B cell (primary cell): ENCODE measurements at regions of chr19 and their contacts with region 1.

Region 1: DNA sequence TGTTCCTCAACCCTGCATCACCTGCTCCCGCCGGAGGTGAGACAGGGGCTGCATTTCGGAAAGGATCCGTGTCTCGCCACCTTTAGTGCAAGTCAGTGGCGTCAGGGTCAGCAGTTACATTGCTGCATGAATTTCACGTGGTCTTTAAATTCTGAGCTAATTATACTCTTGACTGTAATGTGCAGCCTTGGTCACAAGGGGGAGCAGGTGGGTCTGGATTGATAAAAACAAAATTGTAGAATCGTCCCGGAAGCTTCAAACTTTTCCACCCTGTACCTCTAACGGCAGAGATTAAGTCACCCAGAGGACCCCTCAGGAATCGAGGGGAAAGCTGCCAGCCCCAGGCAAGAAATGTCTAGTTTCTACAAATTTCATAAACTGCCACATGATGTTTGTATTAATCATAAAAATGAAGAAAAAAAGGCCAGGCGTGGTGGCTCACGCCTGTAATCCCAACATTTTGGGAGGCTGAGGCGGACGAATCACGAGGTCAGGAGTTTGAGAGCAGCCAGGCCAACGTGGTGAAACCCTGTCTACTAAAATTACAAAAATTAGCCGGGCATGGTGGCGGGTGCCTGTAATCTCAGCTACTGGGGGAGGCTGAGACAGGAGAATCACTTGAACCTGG is 20.2 kb downstream of the BBC3 start:
- DNase-seq: peak; percentile 85
- ATAC-seq: peak; percentile 93
- H3K4me3 ChIP-seq: no peak overlapping the region
- H3K4me3 Mint-ChIP-seq: no peak overlapping the region
- H3K27ac ChIP-seq: peak overlapping the region in 1 of 2 donors; percentile 31
- H3K27ac Mint-ChIP-seq: peak overlapping the region; percentile 23
- H3K4me1 ChIP-seq: peaks cover 6 to 8% of the 10 kb centered on the region in 2 donors
- H3K4me1 Mint-ChIP-seq: peaks cover 6% of the 10 kb centered on the region
- H3K27me3 ChIP-seq: no peaks in the 10 kb centered on the region
- H3K27me3 Mint-ChIP-seq: no peaks in the 10 kb centered on the region
- CTCF ChIP-seq: peak; percentile 84

Region 2: GRCh38 chr19:47130591-47131227 is 80.1 kb before region 1 on chr19 and contains the start of gene SAE1:
- CTCF ChIA-PET with region 1: interaction called, 15 read pairs
- POLR2A ChIA-PET with region 1: no interaction called
- intact Hi-C with region 1: no loop called
- DNase-seq: peak; percentile 97
- ATAC-seq: peak; percentile 89
- H3K4me3 ChIP-seq: peak within 1 kb of the TSS; percentile 50 to 98 (median 88)
- H3K4me3 Mint-ChIP-seq: peak within 1 kb of the TSS; percentile 97
- H3K27ac ChIP-seq: peak within 1 kb of the TSS; percentile 76 to 89
- H3K27ac Mint-ChIP-seq: peak within 1 kb of the TSS; percentile 98
- H3K4me1 ChIP-seq: peaks cover 0 to 21% of the 10 kb centered on the region in 2 donors
- H3K4me1 Mint-ChIP-seq: peaks cover 39% of the 10 kb centered on the region
- H3K27me3 ChIP-seq: no peaks in the 10 kb centered on the region
- H3K27me3 Mint-ChIP-seq: no peaks in the 10 kb centered on the region
- CTCF ChIP-seq: peak; percentile 65
- total RNA-seq, gene SAE1: 41.0 and 45.1 TPM in 2 replicates

Region 3: GRCh38 chr19:47157431-47158321 is 53.1 kb before region 1 on chr19:
- CTCF ChIA-PET with region 1: interaction called, 14 read pairs
- POLR2A ChIA-PET with region 1: no interaction called
- intact Hi-C with region 1: no loop called
- DNase-seq: peak; percentile 63
- ATAC-seq: peak; percentile 53
- H3K4me3 ChIP-seq: peak overlapping the region in 3 of 5 experiments; percentile 5 to 31 (median 15)
- H3K4me3 Mint-ChIP-seq: peak overlapping the region; percentile 66
- H3K27ac ChIP-seq: peak overlapping the region; percentile 37 to 55
- H3K27ac Mint-ChIP-seq: peak overlapping the region; percentile 90
- H3K4me1 ChIP-seq: peaks cover 24 to 28% of the 10 kb centered on the region in 2 donors
- H3K4me1 Mint-ChIP-seq: peaks cover 27% of the 10 kb centered on the region
- H3K27me3 ChIP-seq: no peaks in the 10 kb centered on the region
- H3K27me3 Mint-ChIP-seq: no peaks in the 10 kb centered on the region
- CTCF ChIP-seq: no peak

Region 4: DNA sequence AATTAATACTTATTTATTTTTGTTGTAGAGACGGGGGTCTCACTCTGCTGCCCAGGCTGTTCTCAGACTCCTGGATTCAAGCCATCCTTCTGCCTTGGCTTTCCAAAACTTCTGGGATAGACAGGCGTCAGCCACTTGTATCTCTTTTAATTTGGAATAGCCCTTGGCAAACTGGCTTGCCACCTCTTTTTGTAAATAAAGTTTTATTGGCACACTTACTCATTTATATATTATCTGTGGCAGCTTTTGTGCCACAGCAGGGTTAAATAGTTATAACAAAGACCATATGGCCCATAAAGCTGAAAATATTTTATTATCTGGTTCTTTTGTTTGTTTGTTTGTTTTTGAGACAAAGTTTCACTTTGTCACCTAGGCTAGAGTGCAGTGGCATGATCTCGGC is 10.3 kb before region 1 on chr19:
- CTCF ChIA-PET with region 1: interaction called, 15 read pairs
- POLR2A ChIA-PET with region 1: interaction called, 9 read pairs
- intact Hi-C with region 1: no loop called
- DNase-seq: no peak
- ATAC-seq: no peak
- H3K4me3 ChIP-seq: no peak overlapping the region
- H3K4me3 Mint-ChIP-seq: no peak overlapping the region
- H3K27ac ChIP-seq: no peak overlapping the region
- H3K27ac Mint-ChIP-seq: no peak overlapping the region
- H3K4me1 ChIP-seq: no peaks in the 10 kb centered on the region
- H3K4me1 Mint-ChIP-seq: no peaks in the 10 kb centered on the region
- H3K27me3 ChIP-seq: no peaks in the 10 kb centered on the region
- H3K27me3 Mint-ChIP-seq: no peaks in the 10 kb centered on the region
- CTCF ChIP-seq: no peak

Region 5: GRCh38 chr19:47231215-47231984 is 20.6 kb after region 1 on chr19:
- CTCF ChIA-PET with region 1: interaction called, 90 read pairs
- POLR2A ChIA-PET with region 1: interaction called, 10 read pairs
- intact Hi-C with region 1: loop called (anchors 2 kb)
- DNase-seq: peak; percentile 91
- ATAC-seq: peak; percentile 65
- H3K4me3 ChIP-seq: peak overlapping the region; percentile 35 to 95 (median 53)
- H3K4me3 Mint-ChIP-seq: peak overlapping the region; percentile 81
- H3K27ac ChIP-seq: peak overlapping the region in 1 of 2 donors; percentile 45
- H3K27ac Mint-ChIP-seq: peak overlapping the region; percentile 59
- H3K4me1 ChIP-seq: peaks cover 46 to 54% of the 10 kb centered on the region in 2 donors
- H3K4me1 Mint-ChIP-seq: peaks cover 26% of the 10 kb centered on the region
- H3K27me3 ChIP-seq: peaks cover 0 to 37% (median 1%) of the 10 kb centered on the region in 4 experiments
- H3K27me3 Mint-ChIP-seq: no peaks in the 10 kb centered on the region
- CTCF ChIP-seq: no peak

Region 6: GRCh38 chr19:47256688-47257443 is 46.1 kb after region 1 on chr19:
- CTCF ChIA-PET with region 1: interaction called, 557 read pairs
- POLR2A ChIA-PET with region 1: interaction called, 6 read pairs
- intact Hi-C with region 1: no loop called
- DNase-seq: peak; percentile 98
- ATAC-seq: peak; percentile 77
- H3K4me3 ChIP-seq: peak overlapping the region; percentile 38 to 71 (median 62)
- H3K4me3 Mint-ChIP-seq: peak overlapping the region; percentile 92
- H3K27ac ChIP-seq: peak overlapping the region; percentile 73 to 94
- H3K27ac Mint-ChIP-seq: peak overlapping the region; percentile 95
- H3K4me1 ChIP-seq: peaks cover 14 to 20% of the 10 kb centered on the region in 2 donors
- H3K4me1 Mint-ChIP-seq: peaks cover 40% of the 10 kb centered on the region
- H3K27me3 ChIP-seq: no peaks in the 10 kb centered on the region
- H3K27me3 Mint-ChIP-seq: no peaks in the 10 kb centered on the region
- CTCF ChIP-seq: no peak